ENCODE measurements at regions of chr6 and their contacts with region 1.

Region 1: GRCh38 chr6:130565696-130566095 is 199.9 kb downstream of the TMEM200A start:
- DNase-seq: no peak
- ATAC-seq: no peak
- H3K4me3 ChIP-seq: no peak overlapping the region
- H3K4me3 Mint-ChIP-seq: no peak overlapping the region
- H3K27ac ChIP-seq: no peak overlapping the region
- H3K27ac Mint-ChIP-seq: no peak overlapping the region
- H3K4me1 ChIP-seq: no peaks in the 10 kb centered on the region
- H3K4me1 Mint-ChIP-seq: peaks cover 10% of the 10 kb centered on the region in 2 donors
- H3K27me3 ChIP-seq: no peaks in the 10 kb centered on the region
- H3K27me3 Mint-ChIP-seq: peaks cover 0 to 10% of the 10 kb centered on the region in 2 donors
- CTCF ChIP-seq: no peak

Region 2: GRCh38 chr6:130282234-130282995 is 283.3 kb before region 1 on chr6:
- intact Hi-C with region 1: no loop called
- DNase-seq: peak in 1 of 2 donors; percentile 62
- ATAC-seq: peak; percentile 70 to 87 (median 82)
- H3K4me3 ChIP-seq: no peak overlapping the region
- H3K4me3 Mint-ChIP-seq: no peak overlapping the region
- H3K27ac ChIP-seq: no peak overlapping the region
- H3K27ac Mint-ChIP-seq: peak overlapping the region in 1 of 2 donors; percentile 10
- H3K4me1 ChIP-seq: no peaks in the 10 kb centered on the region
- H3K4me1 Mint-ChIP-seq: peaks cover 9 to 10% of the 10 kb centered on the region in 2 donors
- H3K27me3 ChIP-seq: no peaks in the 10 kb centered on the region
- H3K27me3 Mint-ChIP-seq: no peaks in the 10 kb centered on the region
- CTCF ChIP-seq: peak; percentile 72

Region 3: GRCh38 chr6:131029626-131030297 is 464.1 kb after region 1 on chr6:
- intact Hi-C with region 1: no loop called
- DNase-seq: no peak
- ATAC-seq: no peak
- H3K4me3 ChIP-seq: no peak overlapping the region
- H3K4me3 Mint-ChIP-seq: no peak overlapping the region
- H3K27ac ChIP-seq: no peak overlapping the region
- H3K27ac Mint-ChIP-seq: no peak overlapping the region
- H3K4me1 ChIP-seq: no peaks in the 10 kb centered on the region
- H3K4me1 Mint-ChIP-seq: no peaks in the 10 kb centered on the region
- H3K27me3 ChIP-seq: no peaks in the 10 kb centered on the region
- H3K27me3 Mint-ChIP-seq: no peaks in the 10 kb centered on the region
- CTCF ChIP-seq: no peak

Region 4: GRCh38 chr6:132041706-132042105 is 1476.0 kb after region 1 on chr6:
- intact Hi-C with region 1: loop called (anchors 5 kb)
- DNase-seq: no peak
- ATAC-seq: no peak
- H3K4me3 ChIP-seq: no peak overlapping the region
- H3K4me3 Mint-ChIP-seq: no peak overlapping the region
- H3K27ac ChIP-seq: no peak overlapping the region
- H3K27ac Mint-ChIP-seq: no peak overlapping the region
- H3K4me1 ChIP-seq: no peaks in the 10 kb centered on the region
- H3K4me1 Mint-ChIP-seq: no peaks in the 10 kb centered on the region
- H3K27me3 ChIP-seq: no peaks in the 10 kb centered on the region
- H3K27me3 Mint-ChIP-seq: no peaks in the 10 kb centered on the region
- CTCF ChIP-seq: no peak

Measured in natural killer cell (primary cell).